ENCODE measurements at regions of chr15 and their contacts with region 1.

Region 1: DNA sequence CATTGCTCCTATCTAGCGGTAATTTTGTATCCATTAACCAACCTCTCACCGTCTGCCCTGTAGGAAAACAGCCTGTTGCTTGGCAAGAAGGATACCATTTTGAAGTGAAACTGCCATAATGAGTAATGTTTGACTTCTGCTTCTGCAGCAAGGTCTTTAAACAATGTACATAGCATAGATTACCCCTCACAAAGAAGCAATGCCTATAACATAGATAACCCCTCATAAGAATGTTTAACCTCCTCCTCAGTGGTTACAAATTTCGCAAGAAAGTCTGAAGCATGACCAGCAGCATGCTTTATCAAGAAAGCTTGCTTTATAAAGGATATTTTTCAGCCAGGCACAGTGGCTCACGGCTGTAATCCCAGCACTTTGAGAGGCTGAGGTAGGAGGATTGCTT is 61.2 kb upstream of the MFGE8 start:
- DNase-seq: no peak
- ATAC-seq: no peak
- H3K4me3 ChIP-seq: no peak overlapping the region
- H3K27ac ChIP-seq: no peak overlapping the region
- H3K4me1 ChIP-seq: no peaks in the 10 kb centered on the region
- H3K27me3 ChIP-seq: no peaks in the 10 kb centered on the region

Region 2: GRCh38 chr15:88897456-88898194 is 76.8 kb before region 1 on chr15:
- intact Hi-C with region 1: no loop called
- DNase-seq: peak; percentile 93 to 94
- ATAC-seq: peak; percentile 90
- H3K4me3 ChIP-seq: no peak overlapping the region
- H3K27ac ChIP-seq: peak overlapping the region in 1 of 2 donors; percentile 81
- H3K4me1 ChIP-seq: peaks cover 0 to 2% of the 10 kb centered on the region in 2 donors
- H3K27me3 ChIP-seq: no peaks in the 10 kb centered on the region

Region 3: GRCh38 chr15:88918738-88919137 is 55.7 kb before region 1 on chr15:
- intact Hi-C with region 1: loop called in 1 of 2 experiments (anchors 10 kb)
- DNase-seq: peak; percentile 87 to 92
- ATAC-seq: peak; percentile 77
- H3K4me3 ChIP-seq: no peak overlapping the region
- H3K27ac ChIP-seq: peak overlapping the region; percentile 16 to 83
- H3K4me1 ChIP-seq: no peaks in the 10 kb centered on the region
- H3K27me3 ChIP-seq: no peaks in the 10 kb centered on the region

Region 4: DNA sequence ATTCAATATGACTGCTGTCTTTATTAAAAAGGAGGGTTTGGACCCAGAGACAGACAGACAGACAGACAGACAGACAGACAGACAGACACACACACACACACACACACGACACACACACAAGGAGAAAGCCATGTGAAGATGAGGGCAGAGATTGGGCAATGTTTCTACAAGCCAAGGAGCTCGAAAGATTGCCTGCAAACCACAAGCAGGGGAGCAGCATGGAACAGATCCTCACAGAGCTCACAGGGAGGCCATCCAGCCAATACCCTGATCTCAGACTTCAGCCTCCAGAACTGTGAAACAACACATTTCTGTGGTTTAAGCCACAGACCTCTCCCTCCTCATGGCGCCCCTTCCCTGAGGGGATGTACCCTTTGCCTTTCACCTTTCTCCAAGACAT is 78.1 kb after region 1 on chr15:
- intact Hi-C with region 1: no loop called
- DNase-seq: no peak
- ATAC-seq: peak; percentile 52
- H3K4me3 ChIP-seq: no peak overlapping the region
- H3K27ac ChIP-seq: peak overlapping the region; percentile 51 to 99
- H3K4me1 ChIP-seq: peaks cover 0 to 8% of the 10 kb centered on the region in 2 donors
- H3K27me3 ChIP-seq: no peaks in the 10 kb centered on the region

Region 5: DNA sequence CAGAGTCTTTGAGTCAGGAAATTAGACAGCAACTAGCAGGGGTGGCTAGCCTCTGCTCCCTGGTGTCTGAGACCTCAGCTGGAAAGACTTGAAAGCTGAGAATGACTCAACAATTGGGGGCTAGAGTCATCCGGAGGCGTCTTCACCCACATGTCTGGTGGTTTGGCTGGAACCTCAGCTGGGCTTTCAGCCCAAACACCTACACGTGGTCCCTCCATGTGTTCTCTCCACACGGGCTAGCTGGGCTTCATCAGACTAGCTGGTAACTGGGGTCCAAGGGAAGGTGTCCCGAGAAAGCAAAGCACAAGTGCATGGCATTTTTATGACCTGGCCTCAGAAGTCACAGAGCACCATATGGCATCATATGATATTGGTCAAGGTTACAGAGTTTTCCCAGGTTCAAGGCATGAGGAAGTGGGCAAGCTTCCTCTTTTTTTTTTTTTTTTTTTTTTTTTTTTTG is 94.0 kb after region 1 on chr15:
- intact Hi-C with region 1: no loop called
- DNase-seq: peak in 1 of 2 donors; percentile 58
- ATAC-seq: no peak
- H3K4me3 ChIP-seq: no peak overlapping the region
- H3K27ac ChIP-seq: no peak overlapping the region
- H3K4me1 ChIP-seq: no peaks in the 10 kb centered on the region
- H3K27me3 ChIP-seq: no peaks in the 10 kb centered on the region

Measured in aorta (tissue), 5 donors.